Activated CD4-positive, alpha-beta T cell treated with anti-CD3 and anti-CD28 coated beads, Interleukin-2, amount 10 ng/mL, durations not matched to agents 24 days and 14 days (primary cell): ENCODE measurements at regions of chr15 and their contacts with region 1.

Region 1: DNA sequence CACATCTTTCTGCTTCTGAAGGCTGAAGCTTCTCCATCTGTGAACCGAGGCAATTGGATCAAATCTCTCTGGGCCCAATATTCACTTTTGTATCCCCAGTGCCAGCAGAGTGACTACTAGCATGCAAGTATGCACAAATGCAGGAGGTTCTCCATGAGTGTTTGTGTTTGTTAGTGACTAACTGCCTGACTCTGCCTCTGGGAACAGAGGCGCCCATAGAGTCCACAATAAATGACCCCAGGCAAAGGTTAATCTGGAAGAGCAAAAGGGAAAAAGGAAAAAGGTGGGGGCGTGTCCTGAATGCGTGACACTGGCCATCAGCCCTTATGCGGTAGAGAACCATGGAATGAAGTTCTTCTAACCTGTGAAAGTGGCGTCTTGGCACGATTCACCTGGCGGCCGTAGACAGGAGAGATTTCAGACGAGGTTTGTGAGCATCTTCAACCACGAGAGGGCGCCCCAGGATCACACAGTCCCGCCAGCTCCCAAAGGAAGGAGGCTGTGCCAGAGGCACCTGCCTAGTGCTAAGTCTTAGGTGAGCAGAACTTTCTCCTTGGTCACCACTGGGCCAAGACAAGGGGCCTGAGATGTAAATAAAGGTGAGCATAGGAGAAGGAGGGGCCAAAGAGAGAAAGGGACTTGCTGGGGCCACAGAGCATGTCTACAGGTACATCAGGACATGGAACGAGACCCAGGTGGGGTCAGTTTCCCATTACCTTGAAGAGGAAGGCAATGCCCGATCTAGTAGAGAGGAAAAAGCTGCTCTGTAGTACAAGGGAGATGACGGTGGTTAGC is 44.2 kb downstream of the RBPMS2 start:
- DNase-seq: peak; percentile 95
- H3K4me3 Mint-ChIP-seq: no peak overlapping the region
- H3K27ac Mint-ChIP-seq: no peak overlapping the region
- H3K4me1 Mint-ChIP-seq: peaks cover 9% of the 10 kb centered on the region
- H3K27me3 Mint-ChIP-seq: no peaks in the 10 kb centered on the region

Region 2: GRCh38 chr15:63805993-63806980 is 924.9 kb before region 1 on chr15:
- intact Hi-C with region 1: no loop called
- DNase-seq: peak; percentile 61
- H3K4me3 Mint-ChIP-seq: peak overlapping the region; percentile 22
- H3K27ac Mint-ChIP-seq: peak overlapping the region; percentile 72
- H3K4me1 Mint-ChIP-seq: peaks cover 42% of the 10 kb centered on the region
- H3K27me3 Mint-ChIP-seq: no peaks in the 10 kb centered on the region

Region 3: GRCh38 chr15:64430000-64430735 is 301.0 kb before region 1 on chr15:
- intact Hi-C with region 1: loop called (anchors 5 kb)
- DNase-seq: peak; percentile 87
- H3K4me3 Mint-ChIP-seq: peak overlapping the region; percentile 79
- H3K27ac Mint-ChIP-seq: peak overlapping the region; percentile 95
- H3K4me1 Mint-ChIP-seq: peaks cover 40% of the 10 kb centered on the region
- H3K27me3 Mint-ChIP-seq: no peaks in the 10 kb centered on the region

Region 4: GRCh38 chr15:64686216-64686631 is 45.0 kb before region 1 on chr15:
- intact Hi-C with region 1: loop called (anchors 1 kb)
- DNase-seq: peak; percentile 81
- H3K4me3 Mint-ChIP-seq: no peak overlapping the region
- H3K27ac Mint-ChIP-seq: no peak overlapping the region
- H3K4me1 Mint-ChIP-seq: peaks cover 1% of the 10 kb centered on the region
- H3K27me3 Mint-ChIP-seq: no peaks in the 10 kb centered on the region

Region 5: DNA sequence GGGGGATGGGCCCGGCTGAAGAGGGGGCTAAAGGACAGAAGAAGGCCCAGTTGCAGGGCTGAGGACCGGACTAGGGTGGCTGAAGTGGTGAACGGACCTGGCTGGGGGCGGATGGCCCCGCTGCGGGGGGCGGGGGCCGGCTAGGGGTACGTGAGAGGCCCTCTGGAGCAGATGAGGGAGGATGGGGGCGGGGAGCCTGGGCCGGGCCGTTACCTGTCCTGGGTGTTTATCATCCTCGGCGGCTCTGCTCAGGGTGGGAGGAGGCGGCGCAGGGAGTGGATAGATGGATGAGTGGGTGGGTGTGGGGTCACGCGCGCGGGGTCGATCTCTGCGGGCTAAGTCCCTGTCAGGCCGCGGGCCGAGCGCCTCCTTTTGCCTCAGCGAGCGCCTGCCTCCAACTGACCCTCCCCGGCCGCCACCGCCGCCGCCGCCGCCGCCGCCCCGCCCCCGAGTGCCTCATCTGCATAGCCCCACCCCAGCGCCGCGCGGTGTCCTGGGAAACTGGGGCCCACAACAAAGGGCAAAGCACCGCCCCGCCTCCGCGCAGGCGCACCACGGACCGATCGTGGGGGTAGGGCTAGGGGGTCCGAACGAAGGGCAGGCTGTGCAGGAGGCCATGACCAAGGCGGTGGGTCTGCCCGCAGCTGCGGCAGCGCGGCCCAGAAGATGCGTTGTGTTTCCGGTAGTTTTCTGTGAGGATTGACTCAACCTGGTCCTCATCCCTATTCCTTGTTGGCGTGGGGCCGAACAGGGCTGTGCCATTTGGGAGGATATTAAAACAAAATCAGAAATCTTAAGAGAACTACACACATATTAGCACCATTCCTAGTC is 28.2 kb before region 1 on chr15:
- intact Hi-C with region 1: no loop called
- DNase-seq: peak; percentile 99
- H3K4me3 Mint-ChIP-seq: peak overlapping the region; percentile 89
- H3K27ac Mint-ChIP-seq: peak overlapping the region; percentile 86
- H3K4me1 Mint-ChIP-seq: peaks cover 51% of the 10 kb centered on the region
- H3K27me3 Mint-ChIP-seq: no peaks in the 10 kb centered on the region

Region 6: DNA sequence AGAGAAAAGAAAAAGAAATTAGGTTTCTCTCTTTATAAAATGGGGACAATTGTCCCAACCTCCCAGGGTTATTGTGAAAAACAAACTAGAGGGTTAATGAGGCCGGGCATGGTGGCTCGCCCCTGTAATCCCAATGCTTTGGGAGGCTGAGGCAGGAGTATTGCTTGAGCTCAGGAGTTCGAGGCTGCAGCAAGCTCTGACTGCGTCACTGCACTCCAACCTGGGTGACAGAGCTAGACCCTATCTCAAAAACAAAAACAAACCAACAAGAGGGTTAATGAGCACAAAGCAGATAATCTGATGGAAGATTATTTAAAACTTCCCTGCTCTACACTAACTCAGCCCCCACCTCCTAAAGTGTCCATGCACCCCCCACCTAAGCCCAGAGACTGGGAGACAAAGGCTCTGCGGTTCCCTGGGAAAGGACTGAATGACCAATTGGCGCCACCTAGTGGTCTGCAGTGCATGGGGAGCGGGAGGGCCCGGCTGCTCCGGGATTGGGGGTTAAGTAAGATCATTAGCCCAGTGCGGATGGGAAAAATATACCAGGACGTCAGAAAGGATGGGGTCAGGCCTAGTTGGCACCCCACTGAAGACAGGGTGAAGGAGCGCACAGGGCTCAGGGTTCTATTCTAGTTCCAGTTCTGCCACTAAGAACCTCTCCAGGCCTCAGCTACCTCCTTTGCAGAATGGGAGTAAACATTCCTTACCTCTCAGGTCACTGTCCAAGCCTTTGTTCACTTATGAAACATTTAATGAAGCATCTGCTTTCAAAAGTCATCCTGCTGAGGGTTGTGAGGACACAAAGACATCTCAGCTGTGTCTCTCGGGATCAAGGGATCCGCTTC is 78.7 kb after region 1 on chr15:
- intact Hi-C with region 1: loop called (anchors 1 kb)
- DNase-seq: peak; percentile 91
- H3K4me3 Mint-ChIP-seq: no peak overlapping the region
- H3K27ac Mint-ChIP-seq: no peak overlapping the region
- H3K4me1 Mint-ChIP-seq: peaks cover 1% of the 10 kb centered on the region
- H3K27me3 Mint-ChIP-seq: peaks cover 13% of the 10 kb centered on the region

Region 7: GRCh38 chr15:64905119-64905831 is 174.1 kb after region 1 on chr15:
- intact Hi-C with region 1: loop called (anchors 1 kb)
- DNase-seq: peak; percentile 95
- H3K4me3 Mint-ChIP-seq: peak overlapping the region; percentile 80
- H3K27ac Mint-ChIP-seq: peak overlapping the region; percentile 74
- H3K4me1 Mint-ChIP-seq: peaks cover 32% of the 10 kb centered on the region
- H3K27me3 Mint-ChIP-seq: peaks cover 14% of the 10 kb centered on the region

Region 8: GRCh38 chr15:65077981-65078352 is 346.8 kb after region 1 on chr15:
- intact Hi-C with region 1: loop called (anchors 5 kb)
- DNase-seq: peak; percentile 85
- H3K4me3 Mint-ChIP-seq: no peak overlapping the region
- H3K27ac Mint-ChIP-seq: no peak overlapping the region
- H3K4me1 Mint-ChIP-seq: peaks cover 15% of the 10 kb centered on the region
- H3K27me3 Mint-ChIP-seq: peaks cover 24% of the 10 kb centered on the region